ENCODE measurements at regions of chr3 and their contacts with region 1.

Region 1: GRCh38 chr3:112464264-112464663 is 35.0 kb downstream of the BTLA start:
- DNase-seq: no peak
- ATAC-seq: no peak
- H3K4me3 Mint-ChIP-seq: peak overlapping the region; percentile 37
- H3K27ac Mint-ChIP-seq: peak overlapping the region; percentile 89
- H3K4me1 Mint-ChIP-seq: peaks cover 84% of the 10 kb centered on the region
- H3K27me3 Mint-ChIP-seq: no peaks in the 10 kb centered on the region
- CTCF ChIP-seq: no peak

Region 2: GRCh38 chr3:112489674-112490479 is 25.6 kb after region 1 on chr3:
- CTCF ChIA-PET with region 1: interaction called, 4 read pairs
- POLR2A ChIA-PET with region 1: no interaction called
- intact Hi-C with region 1: loop called (anchors 2 kb)
- DNase-seq: peak; percentile 28
- ATAC-seq: peak; percentile 26
- H3K4me3 Mint-ChIP-seq: peak overlapping the region; percentile 40
- H3K27ac Mint-ChIP-seq: peak overlapping the region; percentile 87
- H3K4me1 Mint-ChIP-seq: peaks cover 60% of the 10 kb centered on the region
- H3K27me3 Mint-ChIP-seq: no peaks in the 10 kb centered on the region
- CTCF ChIP-seq: no peak

Region 3: GRCh38 chr3:112498914-112499711 is 34.8 kb after region 1 on chr3 and contains the start of gene BTLA:
- CTCF ChIA-PET with region 1: interaction called, 4 read pairs
- POLR2A ChIA-PET with region 1: interaction called, 5 read pairs
- intact Hi-C with region 1: loop called (anchors 2 kb)
- DNase-seq: peak; percentile 55
- ATAC-seq: peak; percentile 70
- H3K4me3 Mint-ChIP-seq: peak within 1 kb of the TSS; percentile 89
- H3K27ac Mint-ChIP-seq: peak within 1 kb of the TSS; percentile 97
- H3K4me1 Mint-ChIP-seq: peaks cover 52% of the 10 kb centered on the region
- H3K27me3 Mint-ChIP-seq: no peaks in the 10 kb centered on the region
- CTCF ChIP-seq: no peak
- total RNA-seq, gene BTLA: 12.8 to 13.2 TPM

Measured in activated CD8-positive, alpha-beta T cell treated with anti-CD3 and anti-CD28 coated beads for 36 hours (primary cell).